ENCODE measurements at regions of chr15 and their contacts with region 1.

Region 1: GRCh38 chr15:92077353-92078085 is 224.0 kb downstream of the SLCO3A1 start:
- DNase-seq: peak; percentile 65 to 97 (median 78)

Region 2: GRCh38 chr15:91522663-91523332 is 554.7 kb before region 1 on chr15:
- intact Hi-C with region 1: loop called (anchors 5 kb)
- DNase-seq: peak in 2 of 10 donors; percentile 41 to 56

Region 3: GRCh38 chr15:91706322-91707032 is 371.0 kb before region 1 on chr15:
- intact Hi-C with region 1: loop called (anchors 5 kb)
- DNase-seq: peak; percentile 53 to 96 (median 83)

Region 4: GRCh38 chr15:91944331-91944730 is 133.2 kb before region 1 on chr15:
- intact Hi-C with region 1: no loop called
- DNase-seq: peak in 2 of 10 donors; percentile 36 to 87

Region 5: GRCh38 chr15:91956026-91956723 is 121.3 kb before region 1 on chr15:
- intact Hi-C with region 1: loop called (anchors 10 kb)
- DNase-seq: no peak

Region 6: DNA sequence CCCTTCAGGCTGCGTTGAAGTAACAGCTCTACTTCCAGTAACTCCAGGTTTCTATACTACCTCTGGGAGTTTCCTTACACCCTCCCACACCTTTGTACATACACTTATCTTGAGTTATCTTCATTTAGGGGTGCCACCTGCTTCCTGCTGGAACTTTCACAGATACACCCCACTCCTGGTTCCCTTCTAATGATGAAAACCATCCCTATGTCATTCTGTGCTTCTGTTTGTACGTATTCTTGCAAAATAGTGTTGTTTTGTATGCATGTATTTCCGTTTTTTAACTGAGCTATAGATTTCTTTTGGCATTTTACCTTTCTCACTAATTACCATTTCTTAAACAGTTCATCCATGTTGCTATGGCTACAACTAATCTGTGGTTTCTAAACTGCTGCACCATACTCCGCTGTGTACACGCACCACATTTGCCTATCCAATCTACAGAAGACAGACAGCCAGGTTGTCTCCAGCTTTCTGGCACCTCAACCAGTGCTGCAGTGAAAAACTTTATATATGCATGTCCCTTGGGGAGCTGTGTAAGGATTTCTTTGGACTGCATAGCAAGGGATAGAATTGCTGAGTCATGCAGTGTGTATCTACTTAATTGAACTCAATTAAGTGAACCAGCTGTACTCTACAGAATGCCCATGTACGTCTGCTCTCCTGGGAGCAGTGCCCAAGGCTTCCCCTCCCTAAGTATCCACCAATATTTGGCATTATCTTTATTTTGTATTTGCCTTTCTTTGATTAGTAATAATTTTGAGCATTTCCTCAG is 254.8 kb after region 1 on chr15:
- intact Hi-C with region 1: no loop called
- DNase-seq: no peak

Measured in posterior cingulate gyrus (tissue), 11 donors.